Natural killer cell (primary cell): ENCODE measurements at regions of chrX and their contacts with region 1.

Region 1: GRCh38 chrX:135484641-135485289 is 35.7 kb upstream of the INTS6L start:
- DNase-seq: peak in 1 of 2 donors; percentile 70
- ATAC-seq: peak in 1 of 3 donors; percentile 54
- H3K4me3 ChIP-seq: no peak overlapping the region
- H3K4me3 Mint-ChIP-seq: no peak overlapping the region
- H3K27ac ChIP-seq: no peak overlapping the region
- H3K27ac Mint-ChIP-seq: no peak overlapping the region
- H3K4me1 ChIP-seq: no peaks in the 10 kb centered on the region
- H3K4me1 Mint-ChIP-seq: no peaks in the 10 kb centered on the region
- H3K27me3 ChIP-seq: no peaks in the 10 kb centered on the region
- H3K27me3 Mint-ChIP-seq: peaks cover 4 to 10% of the 10 kb centered on the region in 2 donors
- CTCF ChIP-seq: peak; percentile 61

Region 2: GRCh38 chrX:135421537-135421931 is 63.2 kb before region 1 on chrX:
- intact Hi-C with region 1: no loop called
- DNase-seq: peak; percentile 75 to 91
- ATAC-seq: peak; percentile 90 to 96 (median 96)
- H3K4me3 ChIP-seq: peak overlapping the region; percentile 33
- H3K4me3 Mint-ChIP-seq: peak overlapping the region; percentile 79
- H3K27ac ChIP-seq: no peak overlapping the region
- H3K27ac Mint-ChIP-seq: no peak overlapping the region
- H3K4me1 ChIP-seq: peaks cover 12% of the 10 kb centered on the region
- H3K4me1 Mint-ChIP-seq: peaks cover 5 to 6% of the 10 kb centered on the region in 2 donors
- H3K27me3 ChIP-seq: no peaks in the 10 kb centered on the region
- H3K27me3 Mint-ChIP-seq: peaks cover 8 to 14% of the 10 kb centered on the region in 2 donors
- CTCF ChIP-seq: no peak

Region 3: DNA sequence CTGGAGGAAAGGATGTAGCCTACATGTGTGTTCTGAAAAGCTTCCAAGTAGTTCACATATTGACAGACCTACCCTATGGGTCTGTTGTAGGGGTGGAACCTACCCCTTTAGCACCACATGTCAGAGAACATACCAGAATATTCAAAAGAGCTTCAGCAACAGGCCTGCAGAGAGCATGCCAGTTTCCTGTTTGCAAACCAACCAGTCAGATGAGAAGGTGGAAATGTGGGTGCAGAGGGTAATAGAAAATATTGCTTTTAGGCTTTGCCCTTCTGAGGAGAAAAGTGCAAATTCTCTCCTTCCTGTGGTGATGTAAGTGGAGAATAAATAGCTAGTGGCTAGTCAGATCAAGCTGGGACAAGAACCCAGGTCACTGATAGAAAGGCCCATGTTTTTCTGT is 52.1 kb after region 1 on chrX:
- intact Hi-C with region 1: no loop called
- DNase-seq: peak in 1 of 2 donors; percentile 40
- ATAC-seq: peak; percentile 44 to 66 (median 54)
- H3K4me3 ChIP-seq: no peak overlapping the region
- H3K4me3 Mint-ChIP-seq: no peak overlapping the region
- H3K27ac ChIP-seq: peak overlapping the region; percentile 8
- H3K27ac Mint-ChIP-seq: peak overlapping the region; percentile 78 to 82
- H3K4me1 ChIP-seq: no peaks in the 10 kb centered on the region
- H3K4me1 Mint-ChIP-seq: peaks cover 9 to 18% of the 10 kb centered on the region in 2 donors
- H3K27me3 ChIP-seq: no peaks in the 10 kb centered on the region
- H3K27me3 Mint-ChIP-seq: no peaks in the 10 kb centered on the region
- CTCF ChIP-seq: no peak

Region 4: GRCh38 chrX:135547767-135548166 is 63.0 kb after region 1 on chrX:
- intact Hi-C with region 1: no loop called
- DNase-seq: no peak
- ATAC-seq: no peak
- H3K4me3 ChIP-seq: no peak overlapping the region
- H3K4me3 Mint-ChIP-seq: no peak overlapping the region
- H3K27ac ChIP-seq: no peak overlapping the region
- H3K27ac Mint-ChIP-seq: no peak overlapping the region
- H3K4me1 ChIP-seq: peaks cover 4% of the 10 kb centered on the region
- H3K4me1 Mint-ChIP-seq: peaks cover 13 to 18% of the 10 kb centered on the region in 2 donors
- H3K27me3 ChIP-seq: no peaks in the 10 kb centered on the region
- H3K27me3 Mint-ChIP-seq: peaks cover 0 to 12% of the 10 kb centered on the region in 2 donors
- CTCF ChIP-seq: no peak

Region 5: DNA sequence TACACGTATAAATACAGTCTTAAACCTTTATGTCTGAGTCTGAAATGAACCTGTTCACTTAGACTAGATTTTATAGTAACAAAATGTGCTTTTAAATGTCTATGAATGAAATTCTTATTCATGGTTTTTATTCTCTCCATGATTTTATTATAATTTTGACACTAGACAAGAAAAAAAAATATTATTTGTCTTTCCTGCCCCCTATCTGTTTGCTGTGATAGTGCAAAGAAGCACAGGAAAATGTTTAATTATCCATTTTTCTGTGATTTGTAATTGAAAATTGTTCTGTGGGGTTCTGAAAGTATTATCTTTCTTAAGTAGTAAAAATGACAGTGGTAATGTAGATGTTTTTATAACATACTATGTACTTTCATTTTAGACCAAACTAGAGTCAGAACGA is 87.7 kb after region 1 on chrX:
- intact Hi-C with region 1: loop called (anchors 1 kb)
- DNase-seq: peak in 1 of 2 donors; percentile 21
- ATAC-seq: no peak
- H3K4me3 ChIP-seq: no peak overlapping the region
- H3K4me3 Mint-ChIP-seq: no peak overlapping the region
- H3K27ac ChIP-seq: no peak overlapping the region
- H3K27ac Mint-ChIP-seq: no peak overlapping the region
- H3K4me1 ChIP-seq: no peaks in the 10 kb centered on the region
- H3K4me1 Mint-ChIP-seq: peaks cover 5 to 6% of the 10 kb centered on the region in 2 donors
- H3K27me3 ChIP-seq: no peaks in the 10 kb centered on the region
- H3K27me3 Mint-ChIP-seq: no peaks in the 10 kb centered on the region
- CTCF ChIP-seq: peak; percentile 54

Region 6: DNA sequence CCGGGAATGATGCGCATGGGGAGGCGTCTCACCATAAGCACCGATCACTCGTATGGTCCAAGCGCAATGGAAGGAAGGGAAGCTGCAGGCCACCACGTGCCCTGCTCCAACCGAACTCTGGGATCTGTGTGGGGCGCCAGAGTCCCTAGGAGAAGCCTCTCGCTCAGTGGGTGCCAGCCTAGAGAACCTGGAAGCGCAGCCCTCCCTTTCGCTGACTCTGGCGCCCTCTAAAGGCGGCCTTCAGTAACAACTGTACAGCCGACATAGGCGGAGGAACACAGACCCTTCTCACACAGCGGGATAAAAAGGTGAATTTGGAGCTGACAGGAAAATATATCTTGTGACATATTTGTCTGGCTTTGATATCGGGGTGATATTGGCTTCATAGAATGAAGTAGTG is 111.7 kb after region 1 on chrX:
- intact Hi-C with region 1: loop called (anchors 1 kb)
- DNase-seq: peak; percentile 30 to 67
- ATAC-seq: peak; percentile 52 to 72 (median 55)
- H3K4me3 ChIP-seq: no peak overlapping the region
- H3K4me3 Mint-ChIP-seq: no peak overlapping the region
- H3K27ac ChIP-seq: no peak overlapping the region
- H3K27ac Mint-ChIP-seq: no peak overlapping the region
- H3K4me1 ChIP-seq: no peaks in the 10 kb centered on the region
- H3K4me1 Mint-ChIP-seq: no peaks in the 10 kb centered on the region
- H3K27me3 ChIP-seq: no peaks in the 10 kb centered on the region
- H3K27me3 Mint-ChIP-seq: peaks cover 20 to 50% of the 10 kb centered on the region in 2 donors
- CTCF ChIP-seq: peak; percentile 56

Region 7: GRCh38 chrX:135697601-135698000 is 212.8 kb after region 1 on chrX:
- intact Hi-C with region 1: loop called (anchors 5 kb)
- DNase-seq: peak in 1 of 2 donors; percentile 6
- ATAC-seq: no peak
- H3K4me3 ChIP-seq: no peak overlapping the region
- H3K4me3 Mint-ChIP-seq: no peak overlapping the region
- H3K27ac ChIP-seq: no peak overlapping the region
- H3K27ac Mint-ChIP-seq: no peak overlapping the region
- H3K4me1 ChIP-seq: no peaks in the 10 kb centered on the region
- H3K4me1 Mint-ChIP-seq: no peaks in the 10 kb centered on the region
- H3K27me3 ChIP-seq: no peaks in the 10 kb centered on the region
- H3K27me3 Mint-ChIP-seq: peaks cover 3 to 9% of the 10 kb centered on the region in 2 donors
- CTCF ChIP-seq: no peak